PC-9 (cell line): ENCODE measurements at regions of chr9 and their contacts with region 1.

Region 1: DNA sequence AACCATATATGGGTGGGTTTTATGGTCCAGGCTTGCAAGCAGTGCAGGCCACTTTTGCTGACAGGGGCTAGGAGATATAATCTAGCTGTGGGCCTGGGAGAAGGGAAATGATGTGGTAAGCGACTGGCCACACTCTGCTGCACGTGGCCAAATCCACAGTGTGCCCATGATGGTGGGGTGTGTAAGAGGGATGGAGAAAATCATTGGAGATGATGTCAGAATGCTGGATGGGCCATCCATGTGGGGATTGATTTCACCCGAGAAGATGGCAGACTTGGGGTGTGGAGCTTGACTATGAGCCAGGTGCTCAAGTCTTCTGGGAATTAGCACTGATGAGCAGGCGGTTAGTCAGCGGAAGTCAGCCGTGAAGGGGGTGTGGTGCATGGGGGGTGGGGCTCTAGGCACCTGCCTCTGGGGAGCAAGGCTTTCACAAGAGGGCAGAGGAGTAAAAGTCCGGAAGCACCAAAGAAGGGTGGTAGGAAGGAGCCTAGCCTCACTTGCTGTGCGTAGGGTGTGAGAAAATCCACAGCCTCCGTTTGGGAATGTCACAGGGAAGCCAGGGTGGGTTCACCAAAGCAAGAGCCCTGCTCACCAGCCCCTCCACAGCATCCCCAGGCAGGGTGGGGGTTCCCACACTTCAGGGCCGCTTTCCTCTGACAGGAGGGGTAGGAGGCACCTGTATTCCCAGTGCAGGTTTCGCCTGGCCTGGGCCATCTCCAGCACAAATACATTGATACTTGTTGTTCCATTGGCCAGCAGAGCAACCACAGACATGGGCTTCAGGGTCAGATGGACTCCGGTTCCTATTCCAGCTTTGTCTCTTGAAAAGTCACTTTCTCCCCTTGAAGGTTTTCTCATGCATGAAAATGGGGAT is 44.5 kb upstream of the ANGPTL2 start:
- DNase-seq: peak; percentile 65 to 81
- H3K4me3 ChIP-seq: no peak overlapping the region
- H3K27ac ChIP-seq: no peak overlapping the region
- H3K4me1 ChIP-seq: peaks cover 4% of the 10 kb centered on the region; the same call in 1 of the 2 replicates
- H3K27me3 ChIP-seq: no peaks in the 10 kb centered on the region
- CTCF ChIP-seq: no peak

Region 2: DNA sequence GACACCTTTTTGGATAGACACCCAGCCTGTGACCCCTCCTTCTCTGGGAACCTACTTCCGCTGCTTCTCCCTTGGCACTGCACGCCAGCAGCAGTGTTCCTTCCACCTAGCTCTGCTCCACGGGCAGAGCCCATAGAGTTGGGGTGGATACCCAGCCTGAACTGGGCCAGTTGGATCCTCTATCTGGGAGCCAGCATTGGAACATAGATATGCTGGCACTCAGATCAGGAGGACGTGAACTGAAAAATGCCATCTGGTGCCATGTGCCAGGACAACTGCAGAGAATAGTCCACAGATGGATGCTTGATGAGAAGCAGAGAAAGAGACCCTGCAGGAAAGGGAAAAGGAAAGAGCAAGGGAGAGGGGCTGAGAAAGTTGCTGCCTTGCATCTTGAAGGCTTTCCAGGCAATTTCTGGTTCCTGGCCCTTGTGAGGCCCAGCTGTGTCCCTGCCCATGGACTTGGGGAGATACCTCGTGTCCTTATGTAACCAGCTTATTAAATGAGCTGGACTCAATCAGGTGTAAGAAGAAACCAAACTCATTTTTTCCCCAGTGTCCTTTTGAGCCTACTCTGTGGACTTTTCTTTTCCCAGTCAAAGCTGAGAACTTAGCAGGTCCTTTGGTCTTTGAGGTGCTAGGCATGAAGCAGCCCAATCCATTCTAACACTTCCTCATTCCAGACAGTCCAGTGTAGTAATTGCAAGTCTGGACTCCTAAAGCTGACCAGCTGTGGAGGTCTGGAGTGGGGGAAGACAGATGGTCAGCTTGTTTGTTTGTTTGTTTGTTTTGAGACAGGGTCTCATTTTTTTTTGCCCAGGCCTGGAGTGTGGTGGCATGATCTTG is 83.5 kb before region 1 on chr9:
- CTCF ChIA-PET with region 1: interaction called, 11 read pairs
- POLR2A ChIA-PET with region 1: no interaction called
- intact Hi-C with region 1: no loop called
- DNase-seq: peak in 1 of 2 experiments; percentile 68
- H3K4me3 ChIP-seq: no peak overlapping the region
- H3K27ac ChIP-seq: no peak overlapping the region
- H3K4me1 ChIP-seq: peaks cover 12% of the 10 kb centered on the region
- H3K27me3 ChIP-seq: no peaks in the 10 kb centered on the region
- CTCF ChIP-seq: no peak